ENCODE measurements at regions of chr3 and their contacts with region 1.

Region 1: DNA sequence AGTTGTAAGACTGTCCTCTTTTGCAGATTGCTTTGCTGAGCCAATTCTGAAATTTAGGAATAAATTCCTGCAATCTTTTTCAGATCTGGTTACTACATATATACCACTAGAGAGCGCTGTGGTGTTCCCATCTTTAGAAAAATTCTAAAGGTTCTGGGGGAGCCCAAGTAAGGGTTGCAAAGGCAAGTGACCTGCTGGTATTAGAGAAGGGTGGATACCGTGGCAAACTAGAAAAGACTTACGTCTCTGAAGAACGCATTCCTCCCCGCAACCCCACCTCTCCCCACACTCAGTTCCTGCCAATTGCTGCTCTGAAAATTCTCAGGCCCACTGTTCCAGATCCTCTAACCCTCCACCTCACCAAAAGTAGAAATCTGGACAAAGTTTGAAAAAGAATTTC is 48.5 kb downstream of the EFHB start:
- DNase-seq: peak; percentile 30
- ATAC-seq: peak; percentile 67
- H3K4me3 ChIP-seq: no peak overlapping the region
- H3K27ac ChIP-seq: no peak overlapping the region
- H3K4me1 ChIP-seq: peaks cover 15% of the 10 kb centered on the region; the same call in 1 of the 2 replicates
- H3K27me3 ChIP-seq: no peaks in the 10 kb centered on the region
- CTCF ChIP-seq: peak; percentile 56
- EP300 ChIP-seq: no peak
- POLR2A ChIP-seq: no peak
- RAD21 ChIP-seq: no peak

Region 2: GRCh38 chr3:20185701-20186598 is 300.5 kb after region 1 on chr3 and contains the start of gene SGO1:
- CTCF ChIA-PET with region 1: no interaction called
- POLR2A ChIA-PET with region 1: no interaction called
- in situ Hi-C with region 1: no loop called
- intact Hi-C with region 1: loop called (anchors 5 kb)
- DNase-seq: peak; percentile 94
- ATAC-seq: peak; percentile 98
- H3K4me3 ChIP-seq: peak within 1 kb of the TSS; percentile 91 to 99 (median 93)
- H3K27ac ChIP-seq: peak within 1 kb of the TSS; percentile 91
- H3K4me1 ChIP-seq: peaks cover 21% of the 10 kb centered on the region
- H3K27me3 ChIP-seq: no peaks in the 10 kb centered on the region; a peak in 1 of 5 replicates
- CTCF ChIP-seq: 0 out of 2 replicates have a peak, but pooled peaks have one; percentile 6
- EP300 ChIP-seq: no peak
- POLR2A ChIP-seq: peak; percentile 77 to 88
- RAD21 ChIP-seq: no peak
- total RNA-seq, gene SGO1: 16.1 and 23.8 TPM in 2 replicates

Measured in HepG2 (cell line).